Lower leg skin (tissue), 4 donors: ENCODE measurements at regions of chr16 and their contacts with region 1.

Region 1: GRCh38 chr16:89096768-89097391 is 3.2 kb downstream of the ACSF3 start:
- DNase-seq: no peak
- H3K4me3 ChIP-seq: no peak overlapping the region
- CTCF ChIP-seq: no peak
- POLR2A ChIP-seq: no peak

Region 2: DNA sequence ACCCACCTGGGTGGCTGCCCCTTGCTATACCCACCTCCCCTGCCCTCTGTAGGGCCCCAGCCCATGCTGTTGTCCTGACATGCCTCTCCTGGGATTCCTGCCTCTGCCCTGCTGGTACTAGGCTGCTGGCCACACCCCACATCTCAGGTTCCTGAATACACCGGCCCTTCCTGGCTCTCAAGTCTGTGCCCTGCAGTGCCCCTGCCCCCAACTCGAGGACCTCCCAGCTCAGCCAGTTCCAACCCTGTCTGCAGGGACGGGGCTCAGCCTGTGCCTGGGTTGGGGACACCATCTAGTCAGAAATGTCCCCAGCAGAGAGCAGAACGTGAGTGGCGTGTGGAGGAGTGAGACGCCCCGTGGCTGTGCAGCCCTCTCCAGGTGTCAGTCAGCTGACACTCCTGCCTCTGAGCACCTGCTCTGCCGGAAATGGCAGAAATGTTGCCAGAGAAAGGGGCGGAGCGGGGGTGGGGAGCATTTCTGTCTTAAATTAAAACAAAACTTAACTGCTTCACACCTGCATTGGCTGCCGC is 25.5 kb after region 1 on chr16:
- intact Hi-C with region 1: loop called (anchors 1 kb)
- DNase-seq: no peak
- H3K4me3 ChIP-seq: no peak overlapping the region
- CTCF ChIP-seq: no peak
- POLR2A ChIP-seq: no peak

Region 3: GRCh38 chr16:89308390-89309333 is 211.8 kb after region 1 on chr16:
- intact Hi-C with region 1: no loop called
- DNase-seq: no peak
- H3K4me3 ChIP-seq: no peak overlapping the region
- CTCF ChIP-seq: no peak
- POLR2A ChIP-seq: no peak